Naive thymus-derived CD4-positive, alpha-beta T cell (primary cell): ENCODE measurements at regions of chr1 and their contacts with region 1.

Region 1: GRCh38 chr1:65459397-65459768 is 38.9 kb downstream of the LEPR start:
- DNase-seq: peak in 4 of 9 donors; percentile 4 to 19 (median 6)
- ATAC-seq: no peak
- H3K4me3 ChIP-seq: no peak overlapping the region
- H3K4me3 Mint-ChIP-seq: no peak overlapping the region
- H3K27ac ChIP-seq: no peak overlapping the region
- H3K27ac Mint-ChIP-seq: no peak overlapping the region
- H3K4me1 ChIP-seq: peaks cover 0 to 15% of the 10 kb centered on the region in 2 donors
- H3K4me1 Mint-ChIP-seq: peaks cover 7 to 33% (median 25%) of the 10 kb centered on the region in 7 donors
- H3K27me3 ChIP-seq: no peaks in the 10 kb centered on the region
- H3K27me3 Mint-ChIP-seq: peaks cover 0 to 10% (median 5%) of the 10 kb centered on the region in 5 donors

Region 2: GRCh38 chr1:64650411-64650810 is 809.0 kb before region 1 on chr1:
- CTCF ChIA-PET with region 1: no interaction called
- POLR2A ChIA-PET with region 1: no interaction called
- intact Hi-C with region 1: no loop called
- DNase-seq: no peak
- ATAC-seq: no peak
- H3K4me3 ChIP-seq: no peak overlapping the region
- H3K4me3 Mint-ChIP-seq: no peak overlapping the region
- H3K27ac ChIP-seq: no peak overlapping the region
- H3K27ac Mint-ChIP-seq: no peak overlapping the region
- H3K4me1 ChIP-seq: no peaks in the 10 kb centered on the region
- H3K4me1 Mint-ChIP-seq: no peaks in the 10 kb centered on the region
- H3K27me3 ChIP-seq: peaks cover 0 to 2% of the 10 kb centered on the region in 2 donors
- H3K27me3 Mint-ChIP-seq: peaks cover 0 to 5% (median 3%) of the 10 kb centered on the region in 5 donors

Region 3: GRCh38 chr1:65214340-65215027 is 244.9 kb before region 1 on chr1:
- CTCF ChIA-PET with region 1: interaction called, 4 read pairs
- POLR2A ChIA-PET with region 1: no interaction called
- intact Hi-C with region 1: loop called in 1 of 2 experiments (anchors 1 kb)
- DNase-seq: no peak
- ATAC-seq: no peak
- H3K4me3 ChIP-seq: no peak overlapping the region
- H3K4me3 Mint-ChIP-seq: no peak overlapping the region
- H3K27ac ChIP-seq: no peak overlapping the region
- H3K27ac Mint-ChIP-seq: peak overlapping the region in 1 of 9 donors; percentile 58
- H3K4me1 ChIP-seq: no peaks in the 10 kb centered on the region
- H3K4me1 Mint-ChIP-seq: peaks cover 4 to 43% (median 15%) of the 10 kb centered on the region in 7 donors
- H3K27me3 ChIP-seq: no peaks in the 10 kb centered on the region
- H3K27me3 Mint-ChIP-seq: peaks cover 0 to 4% (median 0%) of the 10 kb centered on the region in 5 donors

Region 4: DNA sequence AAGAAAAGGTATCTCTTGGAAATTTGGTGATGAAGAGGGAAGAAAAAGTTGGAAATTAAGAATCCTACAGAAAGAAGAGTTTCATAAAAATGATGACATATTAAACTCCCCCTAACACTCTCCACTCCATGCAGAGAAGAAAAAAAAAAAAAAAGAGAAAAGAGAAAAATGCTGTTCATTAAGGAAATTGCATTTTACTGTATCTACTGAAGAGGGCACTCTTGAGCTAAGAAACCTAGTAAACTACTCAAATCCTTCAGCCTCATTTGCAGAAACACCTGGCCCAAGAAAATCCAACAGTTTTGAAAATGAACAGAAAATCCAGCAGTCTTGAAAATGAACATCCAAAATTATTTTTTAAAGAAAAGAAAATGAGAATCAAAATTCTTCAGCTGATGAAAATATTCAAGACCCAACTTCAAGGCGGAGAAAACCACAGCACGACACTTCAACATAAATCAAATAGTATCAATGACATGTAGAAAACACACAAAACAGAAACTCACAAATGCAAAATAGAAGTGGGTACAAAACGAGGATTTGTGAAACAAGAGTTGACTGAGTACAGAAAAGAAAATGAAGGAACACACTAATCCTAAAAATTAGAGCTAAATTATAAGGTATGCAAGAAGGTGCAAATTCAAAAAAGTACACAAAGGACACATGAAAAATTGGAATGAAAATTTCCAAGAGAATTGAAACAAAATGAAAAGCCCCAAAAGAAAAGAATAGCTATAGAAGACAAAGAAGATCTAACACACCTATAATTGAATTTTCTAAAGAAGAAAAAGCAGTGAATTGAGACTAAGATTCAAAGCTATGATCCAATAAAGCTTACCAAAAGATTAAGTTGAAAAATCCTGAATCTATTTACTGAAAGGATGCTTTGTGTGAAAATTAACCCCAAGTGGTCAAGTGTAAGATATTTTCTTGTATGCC is 223.2 kb before region 1 on chr1:
- CTCF ChIA-PET with region 1: interaction called, 6 read pairs
- POLR2A ChIA-PET with region 1: no interaction called
- intact Hi-C with region 1: loop called in 1 of 2 experiments (anchors 1 kb)
- DNase-seq: peak in 4 of 9 donors; percentile 12 to 28 (median 22)
- ATAC-seq: peak; percentile 54
- H3K4me3 ChIP-seq: no peak overlapping the region
- H3K4me3 Mint-ChIP-seq: no peak overlapping the region
- H3K27ac ChIP-seq: no peak overlapping the region
- H3K27ac Mint-ChIP-seq: no peak overlapping the region
- H3K4me1 ChIP-seq: no peaks in the 10 kb centered on the region
- H3K4me1 Mint-ChIP-seq: peaks cover 2 to 18% (median 2%) of the 10 kb centered on the region in 7 donors
- H3K27me3 ChIP-seq: no peaks in the 10 kb centered on the region
- H3K27me3 Mint-ChIP-seq: peaks cover 6 to 23% (median 14%) of the 10 kb centered on the region in 5 donors

Region 5: GRCh38 chr1:65431111-65431705 is 28.2 kb before region 1 on chr1:
- CTCF ChIA-PET with region 1: no interaction called
- POLR2A ChIA-PET with region 1: no interaction called
- intact Hi-C with region 1: loop called (anchors 1 to 2 kb)
- DNase-seq: peak in 5 of 9 donors; percentile 32 to 43 (median 33)
- ATAC-seq: peak; percentile 67
- H3K4me3 ChIP-seq: no peak overlapping the region
- H3K4me3 Mint-ChIP-seq: no peak overlapping the region
- H3K27ac ChIP-seq: no peak overlapping the region
- H3K27ac Mint-ChIP-seq: no peak overlapping the region
- H3K4me1 ChIP-seq: no peaks in the 10 kb centered on the region
- H3K4me1 Mint-ChIP-seq: peaks cover 0 to 28% (median 3%) of the 10 kb centered on the region in 7 donors
- H3K27me3 ChIP-seq: no peaks in the 10 kb centered on the region
- H3K27me3 Mint-ChIP-seq: no peaks in the 10 kb centered on the region

Region 6: GRCh38 chr1:65444128-65444527 is 15.3 kb before region 1 on chr1:
- CTCF ChIA-PET with region 1: no interaction called
- POLR2A ChIA-PET with region 1: no interaction called
- intact Hi-C with region 1: loop called in 1 of 2 experiments (anchors 2 kb)
- DNase-seq: no peak
- ATAC-seq: no peak
- H3K4me3 ChIP-seq: no peak overlapping the region
- H3K4me3 Mint-ChIP-seq: no peak overlapping the region
- H3K27ac ChIP-seq: no peak overlapping the region
- H3K27ac Mint-ChIP-seq: no peak overlapping the region
- H3K4me1 ChIP-seq: no peaks in the 10 kb centered on the region
- H3K4me1 Mint-ChIP-seq: no peaks in the 10 kb centered on the region
- H3K27me3 ChIP-seq: no peaks in the 10 kb centered on the region
- H3K27me3 Mint-ChIP-seq: peaks cover 0 to 9% (median 0%) of the 10 kb centered on the region in 5 donors